ENCODE measurements at regions of chr19 and their contacts with region 1.

Region 1: DNA sequence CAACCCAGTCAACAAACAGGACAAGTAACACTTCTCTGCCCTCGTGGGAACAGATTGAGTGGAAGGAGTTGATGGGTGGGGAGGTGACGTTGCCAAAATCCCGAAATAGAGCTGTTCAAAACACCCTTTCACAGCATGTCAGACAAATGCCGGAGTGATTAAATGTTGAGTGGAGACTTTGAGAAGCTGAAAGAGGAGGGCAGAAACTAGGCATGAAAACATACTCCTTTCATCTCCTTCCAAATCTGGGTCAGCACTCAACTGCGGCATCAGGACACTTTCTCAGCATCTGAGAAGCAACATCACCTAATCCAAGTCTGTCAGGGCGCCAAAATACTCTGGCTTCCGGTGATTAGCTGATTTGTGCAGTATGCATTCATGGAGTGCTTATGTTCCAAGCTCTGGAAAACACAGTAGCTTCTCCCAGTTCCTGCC is 51.5 kb upstream of the MRI1 start:
- DNase-seq: no peak
- H3K4me3 ChIP-seq: no peak overlapping the region
- H3K27ac ChIP-seq: no peak overlapping the region
- H3K4me1 ChIP-seq: peaks cover 0 to 4% (median 0%) of the 10 kb centered on the region in 4 donors
- H3K27me3 ChIP-seq: no peaks in the 10 kb centered on the region
- CTCF ChIP-seq: no peak
- EP300 ChIP-seq: no peak
- POLR2A ChIP-seq: no peak

Region 2: DNA sequence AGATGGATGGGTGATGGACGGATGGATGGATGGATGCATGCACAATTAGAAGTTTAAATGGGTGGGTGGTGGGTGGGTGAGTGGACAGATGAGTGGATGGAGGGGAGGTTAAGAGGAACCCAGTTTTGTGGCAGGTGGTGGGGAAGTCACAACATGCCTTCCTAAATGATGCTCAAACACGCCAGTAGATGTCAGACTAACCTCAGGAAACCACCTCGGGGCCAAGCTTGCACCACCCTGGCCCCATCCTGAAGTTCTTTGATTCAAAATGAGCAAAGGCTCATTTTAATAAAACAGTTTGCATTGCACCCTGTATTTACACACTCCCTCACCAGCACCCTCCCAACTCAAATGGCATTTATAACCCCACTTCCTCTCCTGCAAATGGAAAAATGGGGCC is 115.1 kb before region 1 on chr19:
- in situ Hi-C with region 1: loop called in 3 of 4 experiments (anchors 10 to 25 kb)
- intact Hi-C with region 1: loop called (anchors 5 kb)
- DNase-seq: peak; percentile 41
- H3K4me3 ChIP-seq: no peak overlapping the region
- H3K27ac ChIP-seq: no peak overlapping the region
- H3K4me1 ChIP-seq: no peaks in the 10 kb centered on the region
- H3K27me3 ChIP-seq: peaks cover 14% of the 10 kb centered on the region
- CTCF ChIP-seq: peak; percentile 59 to 67 (median 61)
- EP300 ChIP-seq: no peak
- POLR2A ChIP-seq: no peak

Region 3: DNA sequence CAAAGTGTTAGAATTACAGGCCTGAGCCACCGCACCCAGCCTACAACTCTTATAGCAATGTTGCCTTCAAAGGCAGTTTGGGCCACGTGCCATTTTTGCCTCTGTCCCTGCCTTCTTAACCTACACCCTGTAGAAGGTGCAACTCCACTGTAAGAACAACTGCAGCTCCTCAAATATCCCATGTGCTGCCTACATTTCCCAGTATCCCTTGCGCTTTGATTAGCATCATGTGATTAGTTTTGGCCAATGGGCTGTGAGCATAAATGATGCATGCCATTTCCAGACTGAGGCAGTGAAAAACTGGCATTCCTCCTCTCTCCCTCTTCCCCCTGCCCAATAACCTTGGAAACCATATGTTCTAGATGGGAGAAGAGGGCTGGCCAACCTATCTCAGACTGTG is 23.7 kb before region 1 on chr19:
- in situ Hi-C with region 1: no loop called
- intact Hi-C with region 1: no loop called
- DNase-seq: no peak
- H3K4me3 ChIP-seq: no peak overlapping the region
- H3K27ac ChIP-seq: no peak overlapping the region
- H3K4me1 ChIP-seq: no peaks in the 10 kb centered on the region
- H3K27me3 ChIP-seq: peaks cover 5% of the 10 kb centered on the region
- CTCF ChIP-seq: no peak
- EP300 ChIP-seq: no peak
- POLR2A ChIP-seq: no peak

Region 4: GRCh38 chr19:14059093-14059480 is 346.3 kb after region 1 on chr19:
- in situ Hi-C with region 1: no loop called
- intact Hi-C with region 1: no loop called
- DNase-seq: peak; percentile 28
- H3K4me3 ChIP-seq: no peak overlapping the region
- H3K27ac ChIP-seq: no peak overlapping the region
- H3K4me1 ChIP-seq: peaks cover 0 to 16% (median 12%) of the 10 kb centered on the region in 4 donors
- H3K27me3 ChIP-seq: peaks cover 60% of the 10 kb centered on the region
- CTCF ChIP-seq: peak; percentile 54 to 70 (median 64)
- EP300 ChIP-seq: no peak
- POLR2A ChIP-seq: no peak

Measured in transverse colon (tissue), 4 donors.